MCF 10A (cell line): ENCODE measurements at regions of chrX and their contacts with region 1.

Region 1: GRCh38 chrX:38260231-38260630 is 39.6 kb upstream of the SRPX start:
- DNase-seq: peak; percentile 56
- H3K4me3 Mint-ChIP-seq: no peak overlapping the region
- H3K27ac Mint-ChIP-seq: peak overlapping the region; percentile 41
- H3K4me1 Mint-ChIP-seq: no peaks in the 10 kb centered on the region
- H3K27me3 Mint-ChIP-seq: peaks cover 50% of the 10 kb centered on the region
- CTCF ChIP-seq: peak; percentile 43

Region 2: DNA sequence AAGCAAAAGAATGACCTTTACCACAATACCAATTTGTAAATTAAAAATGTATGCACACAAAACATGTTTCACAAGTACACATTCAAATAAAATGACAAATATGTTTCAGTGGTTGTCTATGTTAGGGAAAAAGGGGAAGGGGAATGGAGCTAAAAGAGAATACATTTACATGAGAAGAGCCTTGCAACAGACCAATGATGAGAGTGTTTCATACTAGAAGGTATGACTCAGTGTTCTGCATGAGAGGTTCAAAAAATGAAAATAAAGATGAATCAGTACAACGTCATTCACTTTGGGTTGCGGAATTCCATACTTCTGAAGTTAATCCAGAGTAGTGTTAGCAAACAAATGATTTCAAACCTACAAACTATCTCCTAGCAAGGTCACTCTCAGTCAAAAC is 15.4 kb after region 1 on chrX:
- CTCF ChIA-PET with region 1: interaction called, 11 read pairs
- POLR2A ChIA-PET with region 1: interaction called, 4 read pairs
- intact Hi-C with region 1: no loop called
- DNase-seq: peak; percentile 82
- H3K4me3 Mint-ChIP-seq: no peak overlapping the region
- H3K27ac Mint-ChIP-seq: peak overlapping the region; percentile 13
- H3K4me1 Mint-ChIP-seq: peaks cover 21% of the 10 kb centered on the region
- H3K27me3 Mint-ChIP-seq: peaks cover 17% of the 10 kb centered on the region
- CTCF ChIP-seq: no peak

Region 3: DNA sequence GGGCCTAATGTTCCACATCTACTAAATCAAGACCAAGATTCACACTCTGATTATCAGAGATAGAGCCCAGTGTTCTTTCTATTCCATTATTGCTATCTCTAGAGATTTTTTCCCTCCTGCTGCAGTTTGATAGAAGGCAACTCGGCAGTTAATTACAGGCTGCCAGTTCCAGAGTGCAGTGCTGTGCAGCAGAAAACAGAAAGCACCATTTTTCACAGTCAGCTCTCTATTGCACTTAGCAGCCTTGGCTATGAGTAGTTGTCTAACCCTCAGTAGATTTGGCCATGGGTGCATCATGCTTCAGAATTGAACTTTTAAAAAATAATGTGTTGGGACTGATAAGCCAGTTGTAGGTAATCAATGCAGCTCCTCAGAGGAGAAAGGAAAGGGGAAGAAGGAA is 836.4 kb after region 1 on chrX:
- CTCF ChIA-PET with region 1: no interaction called
- POLR2A ChIA-PET with region 1: no interaction called
- intact Hi-C with region 1: no loop called
- DNase-seq: no peak
- H3K4me3 Mint-ChIP-seq: no peak overlapping the region
- H3K27ac Mint-ChIP-seq: no peak overlapping the region
- H3K4me1 Mint-ChIP-seq: no peaks in the 10 kb centered on the region
- H3K27me3 Mint-ChIP-seq: peaks cover 25% of the 10 kb centered on the region
- CTCF ChIP-seq: no peak